Vagina (tissue), 2 donors: ENCODE measurements at regions of chr9 and their contacts with region 1.

Region 1: DNA sequence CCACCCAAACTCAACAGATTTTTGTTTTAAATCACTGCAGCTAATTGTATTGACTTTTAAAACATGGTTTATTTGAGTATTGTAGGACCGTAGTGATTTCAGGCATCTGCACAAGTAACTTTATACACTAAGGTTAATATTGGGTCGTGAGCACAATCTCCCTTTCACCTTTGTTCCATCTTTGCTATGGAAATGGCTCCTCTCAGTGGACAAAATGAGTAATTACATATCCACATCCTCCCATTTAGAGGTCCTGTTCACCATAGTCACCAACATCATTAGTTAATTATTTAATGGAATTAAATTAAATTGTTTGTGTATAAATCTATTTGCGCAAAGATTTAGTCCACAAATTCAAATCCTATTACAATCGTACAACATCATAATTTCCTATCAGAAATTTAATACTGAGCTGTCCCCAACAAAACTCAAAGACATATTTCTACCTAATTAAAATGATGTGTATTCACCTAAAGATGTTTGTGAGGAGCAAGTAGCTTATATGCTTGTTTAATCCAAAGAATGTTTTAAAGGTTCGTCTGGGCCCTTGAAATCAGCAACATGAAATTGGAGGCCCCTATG is 173.0 kb upstream of the DAPK1 start:
- DNase-seq: no peak
- H3K4me3 ChIP-seq: no peak overlapping the region
- H3K27ac ChIP-seq: no peak overlapping the region
- H3K4me1 ChIP-seq: no peaks in the 10 kb centered on the region
- H3K27me3 ChIP-seq: no peaks in the 10 kb centered on the region
- CTCF ChIP-seq: peak; percentile 52 to 90 (median 65)
- POLR2A ChIP-seq: no peak

Region 2: DNA sequence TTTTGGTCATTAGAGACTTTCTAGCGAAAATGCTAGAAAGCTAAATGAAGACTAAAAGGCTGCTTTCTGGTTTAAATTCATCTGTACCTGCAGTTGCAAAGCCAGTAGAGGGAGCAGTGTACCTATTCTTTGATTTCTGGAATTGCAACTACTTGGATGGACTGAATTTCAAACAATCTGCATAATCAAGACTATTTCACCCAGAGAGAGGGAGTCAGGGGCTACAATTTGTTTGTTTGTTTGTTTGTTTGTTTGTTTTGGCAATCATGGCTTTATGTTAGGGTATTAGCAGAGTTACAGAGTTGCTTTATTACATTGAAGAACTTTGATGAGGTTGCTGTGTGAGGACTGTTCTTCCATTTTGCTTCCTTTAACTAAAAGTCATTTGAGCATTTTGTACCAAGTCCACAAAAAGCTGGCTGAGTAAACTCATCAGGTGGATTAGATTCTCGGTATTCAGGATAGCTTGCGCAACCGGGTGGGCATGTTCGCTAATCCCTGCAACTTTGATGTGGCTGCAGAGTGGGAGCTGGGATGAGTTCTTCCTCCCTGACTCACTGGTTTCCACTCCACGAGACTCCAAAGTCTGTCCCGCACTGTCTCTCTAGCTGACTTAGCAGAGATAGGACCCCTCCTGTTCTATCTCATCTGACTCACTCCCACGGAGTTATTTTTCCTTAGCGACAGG is 890.5 kb before region 1 on chr9:
- intact Hi-C with region 1: loop called (anchors 10 kb)
- DNase-seq: peak in 1 of 2 donors; percentile 91
- H3K4me3 ChIP-seq: no peak overlapping the region
- H3K27ac ChIP-seq: peak overlapping the region; percentile 23
- H3K4me1 ChIP-seq: peaks cover 10% of the 10 kb centered on the region
- H3K27me3 ChIP-seq: no peaks in the 10 kb centered on the region
- CTCF ChIP-seq: peak; percentile 34 to 75 (median 51)
- POLR2A ChIP-seq: no peak

Region 3: DNA sequence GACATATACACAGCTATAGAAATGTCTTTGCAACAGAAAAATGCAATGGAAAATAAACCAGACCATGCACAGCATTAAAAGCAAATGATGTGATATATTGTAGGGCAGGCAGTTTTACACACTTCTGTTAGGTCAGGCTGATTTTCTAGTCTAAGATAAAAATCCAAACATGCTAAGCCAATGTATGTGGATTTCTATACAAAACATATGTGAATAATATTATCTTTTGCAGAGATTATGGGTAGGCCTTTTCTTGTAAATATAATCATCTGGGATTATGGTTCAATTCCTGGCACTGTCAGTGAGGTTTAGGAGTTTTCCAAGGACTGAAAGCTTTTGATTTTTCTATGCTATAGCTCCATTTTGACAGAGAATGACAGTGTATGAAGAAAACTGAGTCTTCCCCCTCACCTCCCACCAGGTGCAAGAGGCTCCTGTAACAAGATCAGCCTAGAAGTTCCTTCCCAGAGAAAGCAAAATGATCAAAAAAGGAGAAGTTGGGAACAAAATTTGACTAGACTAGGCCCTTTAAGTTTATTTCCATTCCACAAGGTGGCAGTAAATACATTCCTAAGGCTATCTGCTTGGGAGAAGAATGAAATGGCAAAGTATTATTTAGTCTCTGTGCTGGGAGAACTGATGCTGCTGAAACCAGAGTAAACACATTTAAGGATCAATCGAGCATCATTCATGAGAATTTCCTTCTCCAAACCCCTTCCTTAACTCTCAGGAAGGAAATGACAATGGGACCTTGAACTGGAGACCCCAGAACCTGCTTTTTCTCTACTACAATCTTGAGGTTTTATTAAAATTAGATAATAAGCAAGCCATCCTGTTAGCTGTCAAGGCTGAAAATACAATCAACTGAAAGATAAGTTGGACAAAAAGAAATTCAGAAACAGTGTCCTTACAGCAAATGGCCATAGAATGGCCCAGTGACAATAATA is 837.5 kb before region 1 on chr9:
- intact Hi-C with region 1: loop called (anchors 5 kb)
- DNase-seq: no peak
- H3K4me3 ChIP-seq: no peak overlapping the region
- H3K27ac ChIP-seq: no peak overlapping the region
- H3K4me1 ChIP-seq: peaks cover 5% of the 10 kb centered on the region
- H3K27me3 ChIP-seq: no peaks in the 10 kb centered on the region
- CTCF ChIP-seq: peak; percentile 49 to 67 (median 60)
- POLR2A ChIP-seq: no peak